ENCODE measurements at regions of chr7 and their contacts with region 1.

Region 1: GRCh38 chr7:33109005-33109757 is at the start of gene RP9:
- DNase-seq: peak; percentile 73
- H3K4me3 Mint-ChIP-seq: peak within 1 kb of the TSS; percentile 88
- H3K27ac Mint-ChIP-seq: peak within 1 kb of the TSS; percentile 56
- H3K4me1 Mint-ChIP-seq: peaks cover 37% of the 10 kb centered on the region
- H3K27me3 Mint-ChIP-seq: no peaks in the 10 kb centered on the region
- total RNA-seq, gene RP9: 14.2 to 17.6 TPM

Region 2: GRCh38 chr7:32390210-32390609 is 719.0 kb before region 1 on chr7:
- CTCF ChIA-PET with region 1: no interaction called
- intact Hi-C with region 1: no loop called
- DNase-seq: no peak
- H3K4me3 Mint-ChIP-seq: no peak overlapping the region
- H3K27ac Mint-ChIP-seq: no peak overlapping the region
- H3K4me1 Mint-ChIP-seq: no peaks in the 10 kb centered on the region
- H3K27me3 Mint-ChIP-seq: no peaks in the 10 kb centered on the region

Region 3: DNA sequence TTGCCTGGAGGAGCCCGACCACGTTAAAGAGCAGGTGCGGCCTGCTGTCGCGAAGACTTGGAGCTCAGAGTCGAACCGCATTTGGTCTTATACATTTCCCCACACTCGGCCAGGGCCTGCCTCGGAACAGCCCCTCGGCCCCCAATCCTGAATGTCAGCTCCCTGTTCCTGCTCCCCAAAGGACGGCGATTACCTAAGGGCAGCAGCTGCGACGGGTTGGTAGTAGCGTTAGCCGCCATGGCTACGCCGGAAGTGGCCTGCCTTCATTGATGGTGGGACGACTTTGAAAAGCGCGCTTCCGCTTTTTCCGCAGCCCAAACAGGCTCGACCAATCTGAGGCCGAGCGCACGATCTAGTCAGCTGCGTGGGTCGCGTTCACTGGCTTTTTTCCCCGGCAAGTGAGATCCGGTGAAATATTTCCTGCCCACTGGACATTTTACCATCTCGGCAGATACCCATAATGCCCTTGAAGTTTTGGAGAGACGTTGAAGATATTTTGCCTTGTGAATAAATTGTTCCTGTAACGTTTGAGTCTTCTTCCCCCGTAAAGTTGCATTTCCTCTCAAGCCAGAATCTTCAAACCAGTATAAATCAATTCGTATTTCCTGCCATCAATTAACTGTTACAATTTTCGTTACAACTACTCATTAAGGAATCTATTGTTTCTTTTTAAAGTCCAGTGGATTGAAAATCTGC is 618.9 kb before region 1 on chr7 and contains the start of gene LSM5:
- CTCF ChIA-PET with region 1: no interaction called
- intact Hi-C with region 1: loop called (anchors 1 kb)
- DNase-seq: peak; percentile 94
- H3K4me3 Mint-ChIP-seq: peak within 1 kb of the TSS; percentile 86
- H3K27ac Mint-ChIP-seq: peak within 1 kb of the TSS; percentile 95
- H3K4me1 Mint-ChIP-seq: peaks cover 27% of the 10 kb centered on the region
- H3K27me3 Mint-ChIP-seq: no peaks in the 10 kb centered on the region
- total RNA-seq, gene LSM5: 132 to 141 TPM

Region 4: DNA sequence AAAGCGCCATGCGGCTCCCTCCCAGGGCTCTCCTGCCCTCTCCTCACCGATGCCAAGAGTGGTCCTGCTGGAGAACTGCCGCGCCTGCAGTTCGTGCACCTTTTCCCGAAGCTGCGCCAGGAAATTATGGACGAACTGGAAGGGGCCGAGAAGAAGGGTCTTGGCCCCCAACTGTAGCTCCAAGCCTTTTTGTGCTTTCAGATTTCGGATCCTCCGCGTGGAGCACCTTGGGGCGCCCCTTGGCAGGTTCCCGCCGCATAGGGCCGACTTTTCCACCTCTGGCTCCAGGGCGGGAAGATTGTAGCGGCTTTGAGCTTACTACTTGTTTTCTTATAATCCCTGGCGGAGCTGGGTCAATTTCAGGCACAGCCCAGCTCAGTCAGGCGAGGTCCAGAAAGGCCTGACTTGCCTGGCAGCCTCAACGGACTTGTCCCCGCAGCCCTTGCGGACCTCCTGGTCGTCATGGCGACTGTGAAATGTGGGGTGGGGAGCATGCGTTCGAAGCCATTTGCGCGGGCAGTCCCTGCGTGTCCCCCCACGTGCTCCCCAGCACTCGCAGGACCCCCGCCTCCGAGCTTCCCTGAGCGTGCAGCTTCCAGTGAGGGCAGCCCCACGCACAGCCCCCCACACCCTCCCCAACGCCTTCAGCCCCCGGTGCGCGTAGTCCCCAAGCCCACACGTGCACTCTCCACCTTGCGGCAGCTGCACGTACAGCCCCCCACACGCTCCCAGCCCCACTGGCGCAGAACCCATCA is 347.6 kb before region 1 on chr7:
- CTCF ChIA-PET with region 1: interaction called, 4 read pairs
- intact Hi-C with region 1: loop called (anchors 1 kb)
- DNase-seq: no peak
- H3K4me3 Mint-ChIP-seq: no peak overlapping the region
- H3K27ac Mint-ChIP-seq: no peak overlapping the region
- H3K4me1 Mint-ChIP-seq: peaks cover 9% of the 10 kb centered on the region
- H3K27me3 Mint-ChIP-seq: peaks cover 40% of the 10 kb centered on the region

Region 5: DNA sequence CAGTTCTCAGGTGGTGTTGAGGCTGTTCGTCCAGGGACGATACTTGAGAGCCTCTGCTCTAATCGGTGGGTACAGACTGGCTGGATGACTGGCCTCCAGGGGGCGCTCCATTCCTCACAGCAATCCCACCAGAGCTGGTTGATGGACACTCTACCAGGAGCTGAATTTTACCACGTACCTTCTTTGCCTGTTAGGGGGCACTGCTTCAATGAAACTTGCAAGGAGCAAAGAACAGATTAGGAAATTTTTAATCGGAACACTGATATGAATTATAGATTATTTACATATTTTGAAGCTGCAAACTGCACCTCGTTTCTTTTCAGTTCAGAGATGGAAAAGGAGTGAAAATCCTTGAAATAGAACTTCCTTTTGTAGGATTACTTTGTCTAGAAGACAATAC is 262.5 kb before region 1 on chr7:
- CTCF ChIA-PET with region 1: interaction called, 43 read pairs
- intact Hi-C with region 1: loop called (anchors 1 kb)
- DNase-seq: peak; percentile 96
- H3K4me3 Mint-ChIP-seq: no peak overlapping the region
- H3K27ac Mint-ChIP-seq: no peak overlapping the region
- H3K4me1 Mint-ChIP-seq: peaks cover 6% of the 10 kb centered on the region
- H3K27me3 Mint-ChIP-seq: peaks cover 12% of the 10 kb centered on the region

Region 6: DNA sequence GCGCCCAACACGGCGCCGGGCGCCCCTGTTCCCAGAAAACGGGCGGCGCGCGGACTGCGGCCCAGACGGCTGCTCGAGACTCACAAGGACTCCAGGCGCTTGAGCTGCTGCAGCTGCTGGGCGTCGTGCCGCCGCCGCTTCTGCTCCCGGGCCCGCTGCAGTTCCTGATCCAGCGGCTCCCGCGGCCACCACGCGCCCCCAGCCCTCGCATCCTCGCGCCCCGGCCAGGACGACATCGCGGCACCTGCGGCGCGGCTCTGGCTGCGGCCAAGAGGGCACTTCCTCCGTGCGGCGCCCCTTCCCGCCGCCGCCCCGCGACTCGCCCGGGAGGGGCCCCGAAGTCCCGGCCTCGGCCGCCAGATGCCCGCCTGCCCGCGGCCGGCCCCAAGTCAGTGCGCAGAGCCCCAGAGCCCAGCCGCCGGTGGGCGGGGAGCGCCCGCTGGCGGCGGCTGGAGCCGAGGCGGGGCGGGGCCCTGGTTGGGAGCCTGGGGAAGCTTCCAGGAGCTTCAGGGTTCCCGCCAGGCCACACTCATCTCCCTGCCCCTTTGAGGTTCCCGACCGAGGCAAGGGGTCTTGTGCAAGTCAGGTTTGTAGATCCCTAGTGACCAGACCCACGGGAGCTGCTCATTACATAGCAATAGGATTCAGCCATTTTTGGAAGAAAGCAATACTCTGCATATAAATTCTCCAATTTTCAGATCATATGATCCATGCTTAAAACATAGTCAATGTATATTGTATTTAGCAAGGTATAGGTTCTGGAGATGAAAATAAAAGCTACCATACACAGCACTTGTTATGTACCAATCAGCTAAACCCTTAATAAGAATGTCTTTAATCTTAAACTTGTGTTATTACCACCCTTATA is 166.2 kb before region 1 on chr7:
- CTCF ChIA-PET with region 1: interaction called, 17 read pairs
- intact Hi-C with region 1: loop called (anchors 1 kb)
- DNase-seq: peak; percentile 74
- H3K4me3 Mint-ChIP-seq: peak overlapping the region; percentile 66
- H3K27ac Mint-ChIP-seq: no peak overlapping the region
- H3K4me1 Mint-ChIP-seq: peaks cover 18% of the 10 kb centered on the region
- H3K27me3 Mint-ChIP-seq: no peaks in the 10 kb centered on the region

Region 7: DNA sequence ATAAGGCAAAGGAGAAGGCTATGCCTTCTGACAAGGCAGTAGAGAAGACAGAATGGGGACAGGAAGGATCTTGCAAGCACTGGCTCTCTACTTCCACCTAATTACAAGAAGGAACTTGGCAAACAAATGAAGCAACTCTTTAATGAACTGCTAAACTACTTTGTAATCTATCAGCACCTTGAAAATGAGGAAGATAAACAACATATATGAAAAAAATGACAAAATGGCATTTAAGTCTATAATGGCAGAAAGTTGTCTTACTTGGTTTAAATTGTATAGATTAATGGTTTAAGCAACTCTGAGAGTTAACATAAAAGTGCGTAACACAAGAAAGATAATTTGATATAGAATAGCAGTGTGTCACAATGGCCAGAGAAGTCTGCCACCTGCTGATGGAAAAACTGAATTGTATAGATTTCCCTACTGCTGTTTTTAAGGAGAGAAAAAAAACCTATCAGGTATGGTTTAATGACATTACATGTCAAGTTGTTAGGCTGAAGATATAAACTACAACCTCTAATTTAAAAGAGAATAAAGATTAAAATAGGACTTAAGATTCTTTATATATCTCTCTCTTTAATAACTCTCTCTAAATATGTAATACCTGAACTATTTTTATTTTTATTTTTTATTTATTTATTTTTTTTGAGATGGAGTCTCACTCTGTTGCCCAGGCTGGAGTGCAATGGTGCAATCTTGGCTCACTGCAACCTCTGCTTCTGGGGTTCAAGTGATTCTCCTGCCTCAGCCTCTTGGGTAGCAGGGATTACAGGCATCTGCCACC is 58.5 kb before region 1 on chr7:
- CTCF ChIA-PET with region 1: interaction called, 10 read pairs
- intact Hi-C with region 1: loop called (anchors 1 kb)
- DNase-seq: peak; percentile 38
- H3K4me3 Mint-ChIP-seq: no peak overlapping the region
- H3K27ac Mint-ChIP-seq: no peak overlapping the region
- H3K4me1 Mint-ChIP-seq: peaks cover 54% of the 10 kb centered on the region
- H3K27me3 Mint-ChIP-seq: no peaks in the 10 kb centered on the region

Region 8: GRCh38 chr7:33087858-33088257 is 21.3 kb before region 1 on chr7:
- CTCF ChIA-PET with region 1: interaction called, 10 read pairs
- intact Hi-C with region 1: no loop called
- DNase-seq: no peak
- H3K4me3 Mint-ChIP-seq: no peak overlapping the region
- H3K27ac Mint-ChIP-seq: no peak overlapping the region
- H3K4me1 Mint-ChIP-seq: no peaks in the 10 kb centered on the region
- H3K27me3 Mint-ChIP-seq: no peaks in the 10 kb centered on the region

Measured in activated naive CD4-positive, alpha-beta T cell treated with anti-CD3 and anti-CD28 coated beads for 36 hours (primary cell).